ENCODE measurements at regions of chr11 and their contacts with region 1.

Region 1: GRCh38 chr11:119323538-119324033 is 6.7 kb upstream of the MCAM start:
- DNase-seq: peak; percentile 84
- H3K4me3 Mint-ChIP-seq: no peak overlapping the region
- H3K27ac Mint-ChIP-seq: no peak overlapping the region
- H3K4me1 Mint-ChIP-seq: peaks cover 33% of the 10 kb centered on the region
- H3K27me3 Mint-ChIP-seq: peaks cover 13% of the 10 kb centered on the region

Region 2: DNA sequence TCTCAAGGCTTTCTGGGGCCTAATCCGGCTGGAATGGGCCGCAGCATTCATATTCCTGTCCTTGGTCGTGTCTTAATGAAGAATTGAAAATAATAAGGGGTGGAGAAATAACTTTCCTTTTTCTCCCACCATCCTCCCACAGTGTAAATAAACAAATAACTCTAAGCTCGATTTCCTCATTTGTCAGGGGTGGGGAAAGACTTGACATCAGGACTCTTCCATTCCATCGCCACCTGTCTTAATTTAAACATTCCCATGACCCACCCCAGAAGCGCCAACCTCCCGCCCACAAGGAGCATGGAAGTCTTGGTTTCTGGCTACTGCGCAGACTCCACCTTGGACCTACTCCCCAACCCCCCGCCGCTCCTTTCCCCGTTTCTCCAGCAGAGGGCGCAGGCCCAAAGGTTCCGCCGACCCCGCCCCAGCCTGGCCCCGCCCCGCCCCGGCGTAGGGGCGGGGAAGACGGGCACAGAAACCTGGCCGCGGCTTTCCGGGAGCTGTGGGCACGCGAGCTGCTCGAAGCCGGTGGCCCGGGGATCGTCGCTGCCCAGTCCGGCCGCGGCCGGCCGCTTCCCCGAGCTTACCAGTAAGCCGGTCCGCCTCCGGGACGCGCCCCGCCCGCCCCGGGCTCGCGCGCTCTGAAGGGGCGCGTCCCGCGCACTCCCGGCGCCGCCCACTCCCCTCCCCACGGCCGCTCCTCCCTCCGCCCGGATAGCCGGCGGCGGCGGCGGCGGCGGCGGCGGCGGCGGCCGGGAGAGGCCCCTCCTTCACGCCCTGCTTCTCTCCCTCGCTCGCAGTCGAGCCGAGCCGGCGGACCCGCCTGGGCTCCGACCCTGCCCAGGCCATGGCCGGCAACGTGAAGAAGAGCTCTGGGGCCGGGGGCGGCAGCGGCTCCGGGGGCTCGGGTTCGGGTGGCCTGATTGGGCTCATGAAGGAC is 117.7 kb before region 1 on chr11 and contains the start of gene CBL:
- CTCF ChIA-PET with region 1: interaction called, 35 read pairs
- POLR2A ChIA-PET with region 1: no interaction called
- DNase-seq: peak; percentile 96
- H3K4me3 Mint-ChIP-seq: peak within 1 kb of the TSS; percentile 86
- H3K27ac Mint-ChIP-seq: peak within 1 kb of the TSS; percentile 92
- H3K4me1 Mint-ChIP-seq: peaks cover 33% of the 10 kb centered on the region
- H3K27me3 Mint-ChIP-seq: no peaks in the 10 kb centered on the region
- total RNA-seq, gene CBL: 45.1 to 53.9 TPM

Region 3: DNA sequence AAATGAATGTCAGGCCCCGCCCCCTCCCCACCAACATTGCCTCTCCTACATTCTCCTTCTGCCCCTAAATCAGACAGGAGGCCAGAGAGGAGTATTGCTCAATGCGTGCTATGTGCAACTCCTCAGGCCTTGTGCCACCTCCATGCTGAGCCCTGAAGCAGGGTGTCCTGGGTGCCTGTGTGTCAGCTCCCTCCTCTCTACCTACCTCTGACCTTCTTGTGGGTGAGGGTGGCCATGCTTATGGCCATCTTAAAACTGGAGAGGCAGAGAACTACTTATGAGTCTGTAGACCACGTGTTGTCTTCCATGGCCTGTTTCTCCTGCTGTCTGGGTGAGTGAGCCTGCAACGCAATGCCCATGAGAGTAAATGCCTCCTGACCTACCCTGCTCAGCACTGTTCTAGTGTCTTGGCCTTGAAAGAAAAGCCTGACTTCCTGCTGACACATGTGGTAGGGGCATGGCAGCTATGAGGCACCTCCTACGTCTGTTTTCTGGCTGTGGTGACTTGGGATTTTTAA is 17.2 kb before region 1 on chr11:
- CTCF ChIA-PET with region 1: interaction called, 80 read pairs
- POLR2A ChIA-PET with region 1: no interaction called
- DNase-seq: peak; percentile 40
- H3K4me3 Mint-ChIP-seq: no peak overlapping the region
- H3K27ac Mint-ChIP-seq: peak overlapping the region; percentile 87
- H3K4me1 Mint-ChIP-seq: peaks cover 31% of the 10 kb centered on the region
- H3K27me3 Mint-ChIP-seq: no peaks in the 10 kb centered on the region

Region 4: GRCh38 chr11:119338318-119338907 is 14.8 kb after region 1 on chr11:
- CTCF ChIA-PET with region 1: interaction called, 104 read pairs
- POLR2A ChIA-PET with region 1: no interaction called
- DNase-seq: peak; percentile 73
- H3K4me3 Mint-ChIP-seq: no peak overlapping the region
- H3K27ac Mint-ChIP-seq: no peak overlapping the region
- H3K4me1 Mint-ChIP-seq: peaks cover 59% of the 10 kb centered on the region
- H3K27me3 Mint-ChIP-seq: peaks cover 30% of the 10 kb centered on the region

Measured in activated CD4-positive, alpha-beta T cell treated with anti-CD3 and anti-CD28 coated beads, Interleukin-2, amount 10 ng/mL, durations not matched to agents 7 days and 5 days (primary cell).